Body of pancreas (tissue), 4 donors: ENCODE measurements at regions of chrX and their contacts with region 1.

Region 1: GRCh38 chrX:12962041-12962504 is 12.8 kb upstream of the TMSB4X start:
- DNase-seq: no peak
- ATAC-seq: no peak
- H3K4me3 ChIP-seq: no peak overlapping the region
- H3K27ac ChIP-seq: no peak overlapping the region
- H3K4me1 ChIP-seq: no peaks in the 10 kb centered on the region
- H3K27me3 ChIP-seq: no peaks in the 10 kb centered on the region
- CTCF ChIP-seq: no peak
- POLR2A ChIP-seq: no peak

Region 2: GRCh38 chrX:13487731-13488523 is 525.9 kb after region 1 on chrX:
- intact Hi-C with region 1: loop called (anchors 10 kb)
- DNase-seq: peak; percentile 45 to 59 (median 50)
- ATAC-seq: peak; percentile 87
- H3K4me3 ChIP-seq: no peak overlapping the region
- H3K27ac ChIP-seq: peak overlapping the region in 3 of 4 donors; percentile 40 to 75 (median 74)
- H3K4me1 ChIP-seq: peaks cover 13% of the 10 kb centered on the region
- H3K27me3 ChIP-seq: no peaks in the 10 kb centered on the region
- CTCF ChIP-seq: peak; percentile 28 to 88 (median 85)
- POLR2A ChIP-seq: no peak

Region 3: GRCh38 chrX:13569479-13570260 is 607.6 kb after region 1 on chrX and contains the start of gene EGFL6:
- intact Hi-C with region 1: no loop called
- DNase-seq: peak in 1 of 4 donors; percentile 7
- ATAC-seq: no peak
- H3K4me3 ChIP-seq: no peak within 1 kb of the TSS
- H3K27ac ChIP-seq: no peak within 1 kb of the TSS
- H3K4me1 ChIP-seq: peaks cover 5% of the 10 kb centered on the region
- H3K27me3 ChIP-seq: no peaks in the 10 kb centered on the region
- CTCF ChIP-seq: no peak
- POLR2A ChIP-seq: no peak
- total RNA-seq, gene EGFL6: not detected